Activated CD4-positive, alpha-beta memory T cell treated with anti-CD3 and anti-CD28 coated beads, Interleukin-2, amount 10 ng/mL, durations not matched to agents 7 days and 5 days (primary cell): ENCODE measurements at regions of chr7 and their contacts with region 1.

Region 1: DNA sequence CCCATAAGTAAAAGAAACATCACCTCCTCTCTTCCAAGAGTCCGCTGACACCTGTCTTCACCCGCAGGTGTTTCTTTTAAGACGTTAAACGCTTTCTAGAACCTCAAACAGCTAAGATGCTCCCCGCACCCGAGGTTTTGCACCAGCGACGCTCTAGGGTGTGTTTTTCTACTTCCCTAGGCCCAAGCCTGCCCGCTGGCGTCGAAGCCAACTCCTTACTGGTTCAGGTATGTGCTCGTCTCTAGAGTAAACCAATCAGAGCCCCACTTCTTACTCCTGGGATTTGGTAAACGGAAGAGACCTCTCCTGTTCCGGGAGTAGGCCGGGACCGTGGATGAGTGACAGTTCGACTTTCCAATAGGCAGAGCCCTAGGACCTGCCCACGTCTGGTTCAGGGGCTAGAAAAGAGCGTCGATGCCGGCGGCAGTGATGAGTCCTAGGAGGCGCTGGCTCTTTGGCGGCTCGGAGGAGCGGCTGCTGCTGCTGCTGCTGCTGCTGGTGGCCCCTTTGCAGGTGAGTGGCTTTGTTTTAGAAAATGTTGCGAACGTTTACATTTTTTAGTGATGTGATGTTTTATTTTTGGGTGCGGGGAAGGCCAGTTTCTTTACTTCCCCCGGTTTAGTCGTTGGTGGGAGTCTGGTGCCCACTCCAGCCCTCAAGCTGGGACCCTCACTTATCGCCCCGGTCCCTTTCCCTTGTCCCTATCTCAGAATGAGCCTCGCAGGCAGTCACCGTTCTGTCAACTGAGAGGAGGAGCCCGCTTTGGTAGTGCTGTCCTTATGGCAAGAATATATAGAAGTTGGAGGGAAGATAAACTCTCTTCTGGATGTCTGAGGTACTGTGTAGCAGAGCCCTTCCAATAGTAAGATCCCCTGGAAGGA is at the start of gene BPGM:
- DNase-seq: peak; percentile 97
- H3K4me3 Mint-ChIP-seq: no peak within 1 kb of the TSS
- H3K27ac Mint-ChIP-seq: no peak within 1 kb of the TSS
- H3K4me1 Mint-ChIP-seq: peaks cover 45% of the 10 kb centered on the region
- H3K27me3 Mint-ChIP-seq: no peaks in the 10 kb centered on the region
- total RNA-seq, gene BPGM: 27.3 to 29.3 TPM

Region 2: GRCh38 chr7:134632937-134633540 is 13.6 kb before region 1 on chr7:
- CTCF ChIA-PET with region 1: interaction called, 27 read pairs
- POLR2A ChIA-PET with region 1: interaction called, 79 read pairs
- DNase-seq: peak; percentile 31
- H3K4me3 Mint-ChIP-seq: no peak overlapping the region
- H3K27ac Mint-ChIP-seq: no peak overlapping the region
- H3K4me1 Mint-ChIP-seq: peaks cover 34% of the 10 kb centered on the region
- H3K27me3 Mint-ChIP-seq: peaks cover 15% of the 10 kb centered on the region

Region 3: DNA sequence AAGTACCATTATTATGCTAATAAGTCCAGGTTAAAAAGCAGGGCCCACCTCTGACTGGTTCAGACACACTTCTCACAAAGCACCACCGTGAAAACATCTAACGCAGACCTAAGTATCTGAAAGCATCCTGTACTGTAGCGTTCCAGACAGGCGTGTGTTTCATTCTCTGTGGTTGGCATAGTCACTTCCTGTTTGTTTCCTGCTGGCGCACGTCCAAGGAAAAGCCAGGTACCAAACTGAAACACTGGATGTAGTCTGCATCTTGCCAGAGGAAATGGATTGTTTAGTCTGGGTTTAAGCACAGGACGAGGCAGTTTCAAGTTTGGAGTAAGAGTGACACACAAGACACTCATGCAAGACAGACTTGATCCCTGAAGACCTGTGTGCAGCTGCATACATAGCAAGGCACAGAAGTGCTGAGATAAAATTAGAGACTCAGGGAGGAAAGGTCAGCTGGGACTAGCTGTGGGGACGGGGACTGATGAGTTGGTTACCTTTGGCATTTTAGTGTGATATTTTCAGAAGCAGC is 23.2 kb after region 1 on chr7:
- CTCF ChIA-PET with region 1: interaction called, 5 read pairs
- POLR2A ChIA-PET with region 1: interaction called, 43 read pairs
- DNase-seq: peak; percentile 61
- H3K4me3 Mint-ChIP-seq: no peak overlapping the region
- H3K27ac Mint-ChIP-seq: peak overlapping the region; percentile 27
- H3K4me1 Mint-ChIP-seq: peaks cover 39% of the 10 kb centered on the region
- H3K27me3 Mint-ChIP-seq: no peaks in the 10 kb centered on the region

Region 4: DNA sequence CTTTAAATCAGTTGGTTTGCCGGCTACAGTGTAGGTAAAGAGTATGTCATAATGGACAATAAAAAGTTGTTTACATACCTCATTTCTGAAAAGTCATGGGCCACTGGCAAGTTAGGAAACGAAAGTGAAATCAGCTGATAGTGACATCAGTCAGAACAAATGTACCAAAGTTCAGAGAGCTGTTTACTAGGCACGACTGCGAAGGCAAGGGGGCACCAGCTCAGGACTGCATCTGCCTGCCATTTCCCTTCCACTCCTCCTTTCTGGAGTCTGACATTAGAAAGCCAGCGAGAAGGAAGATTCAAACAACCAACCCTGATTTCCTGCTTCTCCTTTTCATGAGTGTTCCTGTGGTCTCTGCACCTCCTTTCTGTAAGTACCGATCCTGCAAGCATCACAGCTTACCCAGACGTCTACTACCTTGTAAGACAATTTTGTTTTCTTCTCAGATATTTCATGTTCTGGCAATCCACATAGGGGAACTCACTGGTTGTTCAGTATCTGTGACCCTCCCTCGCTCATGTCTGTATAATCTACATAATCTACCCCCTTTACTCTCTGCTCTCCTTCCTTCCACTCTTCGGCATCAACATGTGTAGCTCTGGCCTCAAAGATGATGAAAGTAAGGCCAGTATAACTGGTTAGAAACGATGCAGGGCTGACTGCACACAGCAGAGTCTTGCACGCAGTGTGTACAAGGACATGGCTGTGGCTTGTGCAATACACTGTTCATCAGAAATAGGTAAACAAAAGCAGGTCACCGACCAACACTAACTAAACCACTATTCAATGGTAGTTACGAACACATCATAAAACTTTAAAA is 501.4 kb after region 1 on chr7 and contains the start of gene TMEM140:
- CTCF ChIA-PET with region 1: interaction called, 4 read pairs
- POLR2A ChIA-PET with region 1: interaction called, 17 read pairs
- DNase-seq: peak; percentile 70
- H3K4me3 Mint-ChIP-seq: peak within 1 kb of the TSS; percentile 82
- H3K27ac Mint-ChIP-seq: peak within 1 kb of the TSS; percentile 91
- H3K4me1 Mint-ChIP-seq: peaks cover 53% of the 10 kb centered on the region
- H3K27me3 Mint-ChIP-seq: no peaks in the 10 kb centered on the region
- total RNA-seq, gene TMEM140: 36.5 to 37.1 TPM

Region 5: DNA sequence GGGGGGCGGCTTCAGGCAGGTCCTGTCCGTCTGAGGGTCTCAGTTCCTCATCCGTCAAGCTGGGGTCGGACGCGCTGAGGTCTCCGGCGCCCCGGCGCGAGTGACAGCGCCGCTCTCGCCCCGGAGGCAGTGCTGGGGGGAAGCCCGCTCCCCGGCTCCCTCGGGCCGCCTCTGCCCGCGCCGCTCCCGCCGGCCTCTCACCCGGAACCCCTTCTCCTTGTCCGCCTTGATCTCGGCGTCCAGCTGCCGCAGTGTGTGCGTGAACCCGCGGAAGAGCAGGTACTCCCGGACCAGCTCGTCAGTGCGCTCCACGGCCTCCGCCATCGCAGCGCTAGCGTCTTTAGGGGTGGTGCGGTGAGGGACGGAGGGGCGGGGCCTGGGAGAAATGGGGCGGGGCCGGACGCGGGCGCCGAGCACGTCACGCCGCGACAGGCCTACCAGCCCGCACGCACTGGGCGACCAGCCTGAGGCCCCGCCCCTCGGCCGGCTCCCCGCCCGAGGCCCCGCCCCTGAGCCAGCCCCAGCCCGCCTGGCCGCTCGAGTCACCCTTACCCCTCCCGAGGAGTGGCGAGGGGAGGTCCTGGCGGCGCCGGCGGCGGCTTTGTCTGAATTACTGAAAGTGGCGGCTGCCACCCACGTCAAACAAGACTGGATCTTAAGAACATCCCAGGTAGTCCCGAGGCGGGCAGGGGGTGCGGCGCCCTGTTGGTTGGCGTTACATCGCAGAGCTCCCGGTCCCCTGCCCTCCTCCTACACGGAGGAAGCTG is 564.7 kb after region 1 on chr7 and contains the start of gene WDR91:
- CTCF ChIA-PET with region 1: no interaction called
- POLR2A ChIA-PET with region 1: interaction called, 10 read pairs
- DNase-seq: peak; percentile 97
- H3K4me3 Mint-ChIP-seq: peak within 1 kb of the TSS; percentile 94
- H3K27ac Mint-ChIP-seq: peak within 1 kb of the TSS; percentile 91
- H3K4me1 Mint-ChIP-seq: peaks cover 30% of the 10 kb centered on the region
- H3K27me3 Mint-ChIP-seq: no peaks in the 10 kb centered on the region
- total RNA-seq, gene WDR91: 10.7 to 11.6 TPM